Dendritic cell treated with granulocyte-macrophage colony-stimulating factor and Interleukin-4, amounts not matched to agents 40 ng/mL and 50 ng/mL, for 4 days (primary cell): ENCODE measurements at regions of chr19 and their contacts with region 1.

Region 1: GRCh38 chr19:6110360-6110977 is at the start of gene RFX2:
- H3K4me3 Mint-ChIP-seq: peak within 1 kb of the TSS; percentile 93
- H3K27ac Mint-ChIP-seq: peak within 1 kb of the TSS; percentile 94
- H3K4me1 Mint-ChIP-seq: peaks cover 49% of the 10 kb centered on the region
- H3K27me3 Mint-ChIP-seq: peaks cover 7% of the 10 kb centered on the region

Region 2: GRCh38 chr19:6056801-6057650 is 53.4 kb before region 1 on chr19:
- intact Hi-C with region 1: loop called (anchors 2 kb)
- H3K4me3 Mint-ChIP-seq: peak overlapping the region; percentile 22
- H3K27ac Mint-ChIP-seq: peak overlapping the region; percentile 92
- H3K4me1 Mint-ChIP-seq: peaks cover 66% of the 10 kb centered on the region
- H3K27me3 Mint-ChIP-seq: no peaks in the 10 kb centered on the region

Region 3: DNA sequence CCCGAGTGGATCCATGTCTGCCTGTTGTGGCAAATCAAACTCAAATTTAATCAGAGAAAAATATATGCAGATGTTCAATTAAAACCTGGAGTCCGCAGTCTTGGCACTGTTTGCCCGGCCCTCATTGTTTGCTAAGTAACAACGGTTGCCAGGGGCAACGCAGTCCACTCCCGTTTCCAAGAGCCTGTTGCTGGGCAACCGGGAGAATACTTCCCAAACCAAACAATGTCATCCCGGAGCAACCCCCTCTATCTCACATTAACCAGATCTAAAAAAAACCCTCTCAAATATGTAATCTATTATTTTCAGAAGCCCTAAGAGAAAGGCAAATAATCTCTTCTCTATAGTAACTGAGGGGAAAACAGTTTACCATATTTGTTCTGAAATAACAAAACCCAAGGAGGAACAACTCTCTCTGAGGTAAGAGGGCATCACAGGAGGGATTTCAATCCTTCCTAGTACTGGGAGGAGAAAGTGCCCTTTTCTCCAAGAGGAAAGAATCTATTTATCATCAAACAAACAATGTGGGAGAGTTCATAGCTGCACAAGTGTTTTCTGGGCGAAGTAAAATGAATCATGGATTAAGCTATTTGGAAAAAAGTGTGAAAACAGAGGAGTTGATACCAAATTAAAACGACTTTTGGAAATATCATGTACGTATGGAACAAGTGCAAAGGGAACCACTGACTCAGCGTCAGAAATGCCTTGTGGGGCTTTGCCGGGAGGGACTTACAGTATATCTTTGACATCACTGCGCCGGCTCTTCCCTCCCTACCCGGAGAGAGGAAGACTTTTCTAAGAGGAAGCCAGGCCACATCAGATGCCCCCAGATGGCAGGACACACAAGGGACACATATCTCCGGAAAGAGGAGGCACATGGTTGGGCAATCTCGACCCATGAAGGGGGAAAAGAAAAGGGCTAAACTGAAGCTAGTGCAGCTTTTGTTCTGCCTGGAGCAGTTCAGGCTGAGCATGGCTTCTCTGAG is 43.5 kb before region 1 on chr19:
- intact Hi-C with region 1: loop called (anchors 2 kb)
- H3K4me3 Mint-ChIP-seq: no peak overlapping the region
- H3K27ac Mint-ChIP-seq: peak overlapping the region; percentile 92
- H3K4me1 Mint-ChIP-seq: peaks cover 72% of the 10 kb centered on the region
- H3K27me3 Mint-ChIP-seq: no peaks in the 10 kb centered on the region